ENCODE measurements at regions of chr6 and their contacts with region 1.

Region 1: GRCh38 chr6:99746261-99746895 is 139.7 kb downstream of the PRDM13 start:
- DNase-seq: peak; percentile 71
- ATAC-seq: peak; percentile 82
- H3K4me3 Mint-ChIP-seq: no peak overlapping the region
- H3K27ac Mint-ChIP-seq: no peak overlapping the region
- H3K4me1 Mint-ChIP-seq: no peaks in the 10 kb centered on the region
- H3K27me3 Mint-ChIP-seq: peaks cover 20% of the 10 kb centered on the region
- CTCF ChIP-seq: peak; percentile 86

Region 2: GRCh38 chr6:99467509-99468106 is 278.8 kb before region 1 on chr6:
- CTCF ChIA-PET with region 1: interaction called, 16 read pairs
- POLR2A ChIA-PET with region 1: no interaction called
- intact Hi-C with region 1: loop called (anchors 5 kb)
- DNase-seq: no peak
- ATAC-seq: no peak
- H3K4me3 Mint-ChIP-seq: no peak overlapping the region
- H3K27ac Mint-ChIP-seq: no peak overlapping the region
- H3K4me1 Mint-ChIP-seq: no peaks in the 10 kb centered on the region
- H3K27me3 Mint-ChIP-seq: no peaks in the 10 kb centered on the region
- CTCF ChIP-seq: peak; percentile 88

Region 3: DNA sequence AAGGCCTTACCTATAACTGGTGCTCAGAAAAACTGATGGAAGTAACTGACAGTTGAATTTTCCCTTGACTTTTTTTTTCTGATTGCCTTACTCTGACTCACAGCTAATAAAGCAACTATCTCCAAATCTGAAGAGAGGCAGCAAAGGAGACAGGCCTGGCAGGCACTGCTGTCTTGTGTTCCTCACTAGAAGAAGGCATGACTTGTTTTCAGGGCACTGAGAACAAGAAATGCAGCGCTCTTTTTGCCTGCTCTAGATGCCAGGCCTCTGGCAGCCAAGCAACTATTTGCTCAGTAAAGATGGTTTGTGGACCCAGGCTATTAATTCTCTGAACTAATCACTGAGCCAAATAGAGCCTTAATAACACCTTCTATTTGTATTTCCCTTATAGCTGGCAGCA is 15.3 kb after region 1 on chr6:
- CTCF ChIA-PET with region 1: interaction called, 16 read pairs
- POLR2A ChIA-PET with region 1: no interaction called
- intact Hi-C with region 1: no loop called
- DNase-seq: no peak
- ATAC-seq: no peak
- H3K4me3 Mint-ChIP-seq: no peak overlapping the region
- H3K27ac Mint-ChIP-seq: no peak overlapping the region
- H3K4me1 Mint-ChIP-seq: no peaks in the 10 kb centered on the region
- H3K27me3 Mint-ChIP-seq: peaks cover 1% of the 10 kb centered on the region
- CTCF ChIP-seq: no peak